Activated CD8-positive, alpha-beta T cell treated with anti-CD3 and anti-CD28 coated beads for 36 hours (primary cell): ENCODE measurements at regions of chr15 and their contacts with region 1.

Region 1: DNA sequence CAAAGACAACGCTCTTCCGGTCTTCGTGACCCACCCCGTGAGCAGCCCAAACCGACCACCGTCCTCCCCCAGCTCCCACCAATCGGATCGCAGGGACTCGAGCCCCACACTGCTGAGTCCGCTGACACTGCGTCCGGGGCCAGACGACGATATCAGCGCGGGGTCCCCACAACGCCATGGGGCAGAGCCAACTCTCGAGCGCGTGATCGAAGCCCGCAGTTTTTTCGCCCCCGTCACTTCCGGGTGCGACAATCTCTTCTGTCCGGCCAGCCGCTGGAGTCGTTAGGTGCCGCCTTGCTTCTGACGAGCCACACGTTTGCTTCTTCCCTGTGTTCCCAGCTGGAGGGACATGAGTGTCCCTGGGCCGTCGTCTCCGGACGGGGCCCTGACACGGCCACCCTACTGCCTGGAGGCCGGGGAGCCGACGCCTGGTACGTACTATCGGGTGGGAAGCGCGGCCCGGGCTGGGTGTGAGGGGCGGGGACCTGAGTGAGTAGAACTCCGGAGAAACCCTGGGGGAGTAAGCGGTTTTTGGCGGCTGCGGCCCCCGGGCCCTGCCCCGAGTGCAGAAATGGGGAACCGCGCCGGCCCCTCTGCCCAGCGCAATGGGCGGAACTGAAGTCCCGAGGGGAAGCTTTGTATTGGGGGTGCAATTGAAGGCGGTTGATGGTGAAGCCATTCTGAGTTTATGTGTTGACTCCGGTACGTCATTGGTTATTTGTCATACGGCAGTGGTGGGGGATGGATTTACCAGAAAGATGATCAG is at the start of gene BLOC1S6:
- DNase-seq: peak; percentile 92
- ATAC-seq: peak; percentile 93
- H3K4me3 Mint-ChIP-seq: peak within 1 kb of the TSS; percentile 99
- H3K27ac Mint-ChIP-seq: peak within 1 kb of the TSS; percentile 100
- H3K4me1 Mint-ChIP-seq: peaks cover 40% of the 10 kb centered on the region
- H3K27me3 Mint-ChIP-seq: no peaks in the 10 kb centered on the region
- CTCF ChIP-seq: no peak
- total RNA-seq, gene BLOC1S6: 43.3 to 46.9 TPM

Region 2: GRCh38 chr15:45634442-45635190 is 47.3 kb after region 1 on chr15 and contains the start of gene SQOR:
- CTCF ChIA-PET with region 1: interaction called, 8 read pairs
- POLR2A ChIA-PET with region 1: interaction called, 11 read pairs
- intact Hi-C with region 1: no loop called
- DNase-seq: peak; percentile 84
- ATAC-seq: peak; percentile 67
- H3K4me3 Mint-ChIP-seq: peak within 1 kb of the TSS; percentile 99
- H3K27ac Mint-ChIP-seq: peak within 1 kb of the TSS; percentile 94
- H3K4me1 Mint-ChIP-seq: peaks cover 36% of the 10 kb centered on the region
- H3K27me3 Mint-ChIP-seq: no peaks in the 10 kb centered on the region
- CTCF ChIP-seq: no peak
- total RNA-seq, gene SQOR: 84.3 to 87.3 TPM

Region 3: DNA sequence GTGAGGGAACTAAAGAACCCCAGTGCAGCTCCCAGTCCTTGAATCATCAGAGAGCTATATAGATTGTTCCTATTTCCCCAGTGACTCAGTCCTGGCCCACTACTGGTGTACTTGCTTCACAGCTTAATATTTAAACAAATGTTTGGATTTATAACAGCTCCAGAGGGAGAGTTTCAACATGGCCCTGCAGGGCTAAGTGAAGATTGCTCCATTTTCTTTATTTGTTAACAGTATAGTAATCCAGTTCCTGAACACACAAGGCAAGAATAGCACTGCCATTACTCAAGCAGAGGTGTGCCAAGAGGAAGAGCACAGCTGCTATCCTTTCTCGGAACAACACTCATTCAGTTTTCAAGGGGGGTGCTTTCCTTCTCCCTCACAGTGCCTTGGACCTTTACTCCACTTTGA is 54.1 kb after region 1 on chr15:
- CTCF ChIA-PET with region 1: interaction called, 8 read pairs
- POLR2A ChIA-PET with region 1: interaction called, 19 read pairs
- intact Hi-C with region 1: no loop called
- DNase-seq: no peak
- ATAC-seq: peak; percentile 5
- H3K4me3 Mint-ChIP-seq: no peak overlapping the region
- H3K27ac Mint-ChIP-seq: no peak overlapping the region
- H3K4me1 Mint-ChIP-seq: peaks cover 90% of the 10 kb centered on the region
- H3K27me3 Mint-ChIP-seq: no peaks in the 10 kb centered on the region
- CTCF ChIP-seq: no peak

Region 4: DNA sequence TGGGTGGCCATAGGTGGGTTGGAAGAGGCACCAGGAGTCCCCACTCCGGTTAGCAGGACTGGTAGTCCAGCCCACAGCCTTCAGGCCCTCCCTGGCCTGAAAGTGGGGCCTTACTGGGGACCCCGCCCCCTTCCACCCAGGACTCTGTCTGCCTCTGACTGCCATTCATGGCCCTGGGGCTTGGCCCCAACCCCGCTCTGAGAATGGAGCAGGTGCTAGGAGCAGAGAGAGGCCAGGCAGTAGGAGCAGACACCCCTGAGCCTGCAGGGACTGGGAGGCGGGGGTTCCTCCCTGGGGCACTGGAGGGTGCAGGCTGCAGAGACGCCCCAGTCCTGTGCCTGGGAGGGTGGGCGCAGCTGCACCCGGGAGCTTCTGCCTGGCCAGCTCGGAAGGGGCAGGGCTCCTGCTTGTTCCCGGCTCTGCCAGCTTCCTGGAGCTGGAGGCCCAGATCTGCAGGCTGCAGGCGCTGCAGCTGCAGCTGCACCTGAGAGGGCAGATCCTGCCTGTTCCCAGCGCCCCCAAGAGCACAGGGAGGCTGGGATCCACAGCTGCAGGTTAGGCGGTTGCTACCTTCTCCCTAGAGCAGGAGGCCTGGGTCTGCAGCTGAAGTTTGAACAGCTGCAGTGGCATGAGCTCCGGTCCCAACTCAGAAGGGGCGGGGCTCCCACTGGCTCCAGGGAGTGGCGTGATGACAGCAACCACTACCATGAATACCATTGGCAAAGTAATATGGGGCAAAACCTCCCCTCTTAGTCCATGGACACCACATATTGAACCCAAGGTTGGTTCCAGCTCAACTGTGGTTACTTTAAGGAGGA is 242.3 kb after region 1 on chr15:
- CTCF ChIA-PET with region 1: no interaction called
- POLR2A ChIA-PET with region 1: no interaction called
- intact Hi-C with region 1: no loop called
- DNase-seq: no peak
- ATAC-seq: no peak
- H3K4me3 Mint-ChIP-seq: no peak overlapping the region
- H3K27ac Mint-ChIP-seq: no peak overlapping the region
- H3K4me1 Mint-ChIP-seq: no peaks in the 10 kb centered on the region
- H3K27me3 Mint-ChIP-seq: no peaks in the 10 kb centered on the region
- CTCF ChIP-seq: no peak